Endothelial cell of umbilical vein (primary cell): ENCODE measurements at regions of chr5 and their contacts with region 1.

Region 1: DNA sequence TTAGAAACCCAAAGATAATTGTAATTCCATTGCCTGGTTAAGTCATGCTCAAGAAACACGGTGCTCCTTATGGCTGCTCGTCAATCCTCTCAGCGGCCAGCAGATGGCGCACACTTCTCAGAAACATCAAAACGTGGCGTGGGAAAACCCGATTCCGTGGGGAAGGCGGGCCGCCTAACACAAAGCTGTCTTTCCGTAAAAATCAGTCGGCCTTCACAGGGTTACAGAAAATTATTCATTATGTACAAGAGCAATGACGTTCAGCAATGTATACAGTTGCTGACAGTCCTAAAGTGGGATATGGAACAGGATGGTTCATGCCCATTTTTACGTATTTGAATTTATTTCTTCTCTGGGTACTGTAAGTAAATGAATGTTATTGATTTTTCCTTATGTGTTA is 83.5 kb downstream of the PDE4D start:
- DNase-seq: peak; percentile 46
- H3K4me3 ChIP-seq: no peak overlapping the region
- H3K27ac ChIP-seq: no peak overlapping the region
- H3K4me1 ChIP-seq: no peaks in the 10 kb centered on the region
- H3K27me3 ChIP-seq: peaks cover 4 to 17% of the 10 kb centered on the region in 2 experiments
- CTCF ChIP-seq: peak; percentile 80 to 91
- POLR2A ChIP-seq: no peak

Region 2: GRCh38 chr5:57947181-57947580 is 1862.9 kb before region 1 on chr5:
- CTCF ChIA-PET with region 1: no interaction called
- POLR2A ChIA-PET with region 1: no interaction called
- dilution Hi-C with region 1: no loop called
- intact Hi-C with region 1: no loop called
- DNase-seq: no peak
- H3K4me3 ChIP-seq: no peak overlapping the region
- H3K27ac ChIP-seq: no peak overlapping the region
- H3K4me1 ChIP-seq: no peaks in the 10 kb centered on the region
- H3K27me3 ChIP-seq: peaks cover 0 to 2% of the 10 kb centered on the region in 2 experiments
- CTCF ChIP-seq: no peak
- POLR2A ChIP-seq: no peak

Region 3: GRCh38 chr5:60287174-60287771 is 477.2 kb after region 1 on chr5:
- CTCF ChIA-PET with region 1: interaction called, 148 read pairs
- POLR2A ChIA-PET with region 1: no interaction called
- dilution Hi-C with region 1: no loop called
- intact Hi-C with region 1: loop called (anchors 1 kb)
- DNase-seq: peak; percentile 62
- H3K4me3 ChIP-seq: no peak overlapping the region
- H3K27ac ChIP-seq: no peak overlapping the region
- H3K4me1 ChIP-seq: no peaks in the 10 kb centered on the region
- H3K27me3 ChIP-seq: peaks cover 4 to 13% of the 10 kb centered on the region in 2 experiments
- CTCF ChIP-seq: peak; percentile 82 to 86
- POLR2A ChIP-seq: no peak

Region 4: GRCh38 chr5:60586307-60586901 is 776.4 kb after region 1 on chr5:
- CTCF ChIA-PET with region 1: interaction called, 4 read pairs
- POLR2A ChIA-PET with region 1: no interaction called
- dilution Hi-C with region 1: no loop called
- intact Hi-C with region 1: loop called (anchors 1 kb)
- DNase-seq: peak; percentile 36
- H3K4me3 ChIP-seq: no peak overlapping the region
- H3K27ac ChIP-seq: no peak overlapping the region
- H3K4me1 ChIP-seq: no peaks in the 10 kb centered on the region
- H3K27me3 ChIP-seq: no peaks in the 10 kb centered on the region
- CTCF ChIP-seq: peak in 1 of 2 donors; percentile 24
- POLR2A ChIP-seq: no peak

Region 5: GRCh38 chr5:60668686-60669304 is 858.8 kb after region 1 on chr5:
- CTCF ChIA-PET with region 1: interaction called, 30 read pairs
- POLR2A ChIA-PET with region 1: no interaction called
- dilution Hi-C with region 1: no loop called
- intact Hi-C with region 1: loop called (anchors 1 kb)
- DNase-seq: peak; percentile 42
- H3K4me3 ChIP-seq: no peak overlapping the region
- H3K27ac ChIP-seq: no peak overlapping the region
- H3K4me1 ChIP-seq: no peaks in the 10 kb centered on the region
- H3K27me3 ChIP-seq: no peaks in the 10 kb centered on the region
- CTCF ChIP-seq: peak; percentile 24 to 39
- POLR2A ChIP-seq: no peak